ENCODE measurements at regions of chr9 and their contacts with region 1.

Region 1: GRCh38 chr9:113817171-113817570 is 58.9 kb upstream of the ZNF618 start:
- DNase-seq: no peak
- ATAC-seq: no peak
- H3K4me3 ChIP-seq: no peak overlapping the region
- H3K27ac ChIP-seq: no peak overlapping the region
- H3K4me1 ChIP-seq: no peaks in the 10 kb centered on the region
- H3K27me3 ChIP-seq: peaks cover 2% of the 10 kb centered on the region
- CTCF ChIP-seq: no peak

Region 2: DNA sequence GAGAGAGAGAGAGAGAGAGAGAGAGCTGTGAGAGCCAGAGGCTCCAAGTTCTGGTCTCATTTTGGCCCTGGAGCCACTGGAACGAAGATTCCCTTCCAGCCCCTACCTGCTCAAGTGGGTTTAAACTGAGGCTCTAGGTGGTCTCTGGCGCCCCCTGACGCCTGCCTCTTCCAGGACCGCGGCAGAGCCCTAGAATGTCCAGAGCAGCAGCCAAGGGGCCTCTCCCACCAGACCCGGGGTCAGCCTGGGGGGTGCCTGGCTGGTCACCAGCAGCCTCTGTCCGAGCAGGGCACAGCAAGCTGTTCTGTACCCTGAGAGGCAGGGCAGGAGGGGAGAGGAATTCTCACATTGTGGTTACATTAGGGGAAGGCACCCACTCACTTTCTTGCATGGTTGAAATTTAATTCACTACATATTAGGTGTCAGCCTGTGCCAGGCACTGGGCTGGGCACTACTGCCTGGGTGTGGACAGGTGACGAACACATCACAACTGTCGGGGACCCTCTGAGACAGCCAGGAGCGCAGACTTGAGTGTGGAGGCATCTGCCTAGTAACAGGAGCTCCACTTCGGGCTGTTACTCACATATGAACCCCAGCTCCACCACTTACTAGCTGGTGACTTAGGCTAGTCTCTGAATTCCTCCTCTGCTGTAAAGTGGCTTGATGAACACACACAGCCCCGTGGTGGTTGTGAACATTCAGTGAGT is 216.4 kb after region 1 on chr9:
- CTCF ChIA-PET with region 1: no interaction called
- POLR2A ChIA-PET with region 1: no interaction called
- in situ Hi-C with region 1: no loop called
- intact Hi-C with region 1: loop called (anchors 10 kb)
- DNase-seq: no peak
- ATAC-seq: peak; percentile 76
- H3K4me3 ChIP-seq: no peak overlapping the region
- H3K27ac ChIP-seq: no peak overlapping the region
- H3K4me1 ChIP-seq: no peaks in the 10 kb centered on the region
- H3K27me3 ChIP-seq: no peaks in the 10 kb centered on the region
- CTCF ChIP-seq: peak; percentile 66

Measured in Panc1 (cell line).